Left ventricle myocardium inferior (tissue), 1 donor: ENCODE measurements at regions of chr19 and their contacts with region 1.

Region 1: GRCh38 chr19:48152551-48152950 is 17.6 kb downstream of the LIG1 start:
- DNase-seq: peak; percentile 49
- H3K4me3 ChIP-seq: no peak overlapping the region
- H3K27ac ChIP-seq: peak overlapping the region; percentile 5
- H3K4me1 ChIP-seq: no peaks in the 10 kb centered on the region
- H3K27me3 ChIP-seq: no peaks in the 10 kb centered on the region
- CTCF ChIP-seq: peak; percentile 88

Region 2: GRCh38 chr19:48110350-48110966 is 42.1 kb before region 1 on chr19 and contains the start of gene PLA2G4C:
- intact Hi-C with region 1: loop called (anchors 1 kb)
- DNase-seq: peak; percentile 92
- H3K4me3 ChIP-seq: peak within 1 kb of the TSS; percentile 67
- H3K27ac ChIP-seq: peak within 1 kb of the TSS; percentile 96
- H3K4me1 ChIP-seq: peaks cover 37% of the 10 kb centered on the region
- H3K27me3 ChIP-seq: no peaks in the 10 kb centered on the region
- CTCF ChIP-seq: no peak
- total RNA-seq, gene PLA2G4C: 35.3 TPM